ENCODE measurements at regions of chr4 and their contacts with region 1.

Region 1: DNA sequence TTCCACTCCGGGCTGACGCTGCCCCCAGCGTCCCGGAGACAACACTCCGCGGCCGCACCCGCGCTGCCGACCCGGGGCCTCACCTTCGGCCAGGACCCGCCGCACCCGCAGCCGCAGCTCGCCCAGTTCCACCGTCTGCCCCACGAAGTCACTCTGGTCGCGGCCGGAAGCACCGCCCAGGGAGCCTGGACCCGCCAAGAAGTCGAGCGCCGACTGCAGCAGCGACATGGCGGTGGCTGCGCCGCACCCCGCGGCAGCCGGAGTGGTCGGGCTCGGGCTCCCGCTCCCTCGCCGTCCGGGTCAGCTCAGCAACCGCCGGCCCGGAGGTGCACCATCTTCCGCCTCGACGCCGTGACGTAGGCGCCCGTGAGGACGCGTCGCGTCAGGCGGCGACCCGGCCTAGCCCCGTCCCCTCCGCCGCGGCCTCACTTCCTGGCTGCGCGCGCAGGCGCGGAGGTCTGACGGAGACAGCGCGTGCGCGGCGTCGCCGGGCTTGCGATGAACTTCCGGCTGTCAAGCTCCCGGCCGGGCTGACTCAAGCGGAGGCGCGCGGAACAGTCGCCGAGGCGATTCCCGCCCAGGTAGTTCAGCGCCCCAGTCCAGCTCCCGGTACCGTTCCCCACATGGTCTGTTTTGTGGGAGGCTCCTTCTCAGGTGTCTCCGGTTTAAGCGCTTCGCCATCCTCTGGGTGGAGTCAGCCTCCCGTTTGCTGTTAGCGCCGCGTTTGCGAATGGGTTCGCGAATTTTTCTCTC is at the starts of genes GAK and TMEM175:
- DNase-seq: peak; percentile 94 to 97
- H3K4me3 ChIP-seq: peak within 1 kb of the TSS; percentile 99 to 100
- H3K27ac ChIP-seq: peak within 1 kb of the TSS; percentile 86 to 95
- H3K4me1 ChIP-seq: peaks cover 0 to 50% (median 34%) of the 10 kb centered on the region in 4 donors
- H3K27me3 ChIP-seq: no peaks in the 10 kb centered on the region
- CTCF ChIP-seq: peak in 1 of 2 experiments; percentile 20

Region 2: DNA sequence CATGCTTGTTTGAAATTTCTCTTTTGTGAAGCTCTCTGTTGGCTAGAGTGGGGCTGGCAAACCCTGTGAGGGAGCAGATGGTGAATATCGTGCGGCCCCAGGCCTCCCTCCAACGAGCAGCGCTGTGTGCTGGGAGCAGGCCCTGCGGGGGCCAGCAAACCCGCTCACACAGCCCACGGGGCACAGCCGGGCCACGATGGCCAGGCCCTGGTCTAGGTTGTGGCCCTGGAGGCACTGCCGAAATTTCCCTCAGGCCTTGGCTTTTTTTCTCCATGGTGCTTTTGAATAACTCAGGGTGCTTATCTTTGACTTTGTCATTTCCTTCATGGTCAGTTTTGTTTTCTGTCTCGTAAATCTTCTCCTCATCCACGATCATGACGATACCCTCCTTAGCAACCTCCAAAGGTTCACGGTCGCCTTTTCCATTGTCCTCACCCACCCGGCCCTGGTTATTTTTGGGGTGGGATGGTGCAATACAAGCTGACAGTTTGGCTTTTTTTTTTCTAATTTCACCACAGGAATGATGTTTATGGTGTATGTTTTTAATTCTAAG is 205.8 kb before region 1 on chr4:
- intact Hi-C with region 1: no loop called
- DNase-seq: no peak
- H3K4me3 ChIP-seq: no peak overlapping the region
- H3K27ac ChIP-seq: peak overlapping the region; percentile 16 to 37
- H3K4me1 ChIP-seq: peaks cover 0 to 14% (median 8%) of the 10 kb centered on the region in 4 donors
- H3K27me3 ChIP-seq: no peaks in the 10 kb centered on the region
- CTCF ChIP-seq: no peak

Region 3: GRCh38 chr4:808860-809570 is 123.1 kb before region 1 on chr4:
- intact Hi-C with region 1: no loop called
- DNase-seq: no peak
- H3K4me3 ChIP-seq: no peak overlapping the region
- H3K27ac ChIP-seq: no peak overlapping the region
- H3K4me1 ChIP-seq: no peaks in the 10 kb centered on the region
- H3K27me3 ChIP-seq: peaks cover 0 to 44% of the 10 kb centered on the region in 2 donors
- CTCF ChIP-seq: no peak

Region 4: GRCh38 chr4:825238-825835 is 106.8 kb before region 1 on chr4:
- intact Hi-C with region 1: no loop called
- DNase-seq: no peak
- H3K4me3 ChIP-seq: peak overlapping the region; percentile 25 to 49
- H3K27ac ChIP-seq: no peak overlapping the region
- H3K4me1 ChIP-seq: peaks cover 0 to 24% (median 18%) of the 10 kb centered on the region in 4 donors
- H3K27me3 ChIP-seq: peaks cover 8 to 95% of the 10 kb centered on the region in 2 donors
- CTCF ChIP-seq: no peak

Region 5: DNA sequence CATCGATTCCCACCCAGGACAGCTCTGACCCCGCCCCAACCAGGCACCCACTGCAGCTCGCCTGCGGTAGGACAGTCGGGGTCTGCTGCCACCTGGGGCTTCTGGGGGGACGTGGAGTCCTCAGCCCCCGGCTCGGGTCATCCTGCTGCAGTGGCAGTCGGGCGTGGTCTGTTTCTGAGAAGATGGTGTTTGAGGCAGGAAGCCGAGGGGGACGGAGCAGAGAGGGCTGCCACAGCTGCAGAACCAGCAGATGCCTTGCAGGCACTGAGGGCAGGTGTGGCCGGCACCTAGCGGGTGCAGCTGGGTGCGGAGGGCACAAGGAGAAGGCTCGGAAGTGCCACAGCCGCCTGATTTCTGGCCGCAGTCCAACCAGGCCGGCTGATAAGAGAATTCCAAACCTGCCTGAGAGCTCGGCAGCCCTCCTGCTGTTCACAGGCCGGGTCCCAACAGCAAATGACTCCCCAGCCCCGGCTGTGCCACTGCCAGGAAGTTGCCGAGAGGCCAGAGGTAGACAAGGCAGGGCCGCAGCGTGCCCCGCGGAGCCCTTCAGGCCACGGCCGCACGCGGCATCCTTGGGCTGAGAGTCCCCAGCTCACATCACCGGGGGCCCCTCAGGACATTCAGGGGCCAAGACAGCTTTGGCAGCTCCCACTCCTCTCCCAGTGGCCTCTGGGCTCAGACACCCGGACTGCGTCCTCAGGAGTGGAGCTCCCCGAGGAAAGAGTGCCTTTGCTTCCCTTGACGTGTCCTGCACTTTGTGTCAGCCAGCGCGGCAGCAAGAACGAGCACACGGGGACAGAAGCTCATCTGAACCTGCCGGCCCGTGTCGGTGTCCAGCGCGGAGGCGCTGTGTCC is 96.8 kb before region 1 on chr4:
- intact Hi-C with region 1: no loop called
- DNase-seq: no peak
- H3K4me3 ChIP-seq: no peak overlapping the region
- H3K27ac ChIP-seq: no peak overlapping the region
- H3K4me1 ChIP-seq: no peaks in the 10 kb centered on the region
- H3K27me3 ChIP-seq: peaks cover 0 to 22% of the 10 kb centered on the region in 2 donors
- CTCF ChIP-seq: no peak

Region 6: GRCh38 chr4:973431-974397 is 41.6 kb after region 1 on chr4 and contains the start of gene DGKQ:
- intact Hi-C with region 1: loop called (anchors 5 kb)
- DNase-seq: peak; percentile 84 to 93
- H3K4me3 ChIP-seq: peak within 1 kb of the TSS; percentile 61 to 73
- H3K27ac ChIP-seq: peak within 1 kb of the TSS; percentile 36 to 45
- H3K4me1 ChIP-seq: peaks cover 0 to 29% (median 23%) of the 10 kb centered on the region in 4 donors
- H3K27me3 ChIP-seq: no peaks in the 10 kb centered on the region
- CTCF ChIP-seq: no peak